ENCODE measurements at regions of chr12 and their contacts with region 1.

Region 1: DNA sequence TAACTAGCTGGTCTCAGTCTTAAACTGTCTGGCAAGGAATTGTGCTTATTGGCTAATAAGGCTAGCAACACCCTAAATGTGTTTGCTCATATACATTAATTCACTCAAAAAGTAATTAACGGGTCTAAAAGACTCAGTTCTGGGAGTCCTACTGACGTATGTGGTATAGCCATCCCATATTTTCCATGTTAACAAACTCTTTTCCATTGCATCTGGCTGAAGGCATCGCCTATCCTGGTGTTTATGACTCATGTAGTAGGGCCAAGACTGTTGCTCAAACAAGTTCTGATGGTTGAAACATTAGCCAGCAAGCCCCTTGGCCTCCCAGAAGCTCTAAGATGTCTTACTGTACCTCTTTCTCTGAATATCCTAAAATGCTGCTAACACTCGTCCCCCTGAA is 98.5 kb downstream of the PHLDA1 start:
- DNase-seq: no peak
- ATAC-seq: no peak
- H3K4me3 Mint-ChIP-seq: no peak overlapping the region
- H3K27ac Mint-ChIP-seq: no peak overlapping the region
- H3K4me1 Mint-ChIP-seq: peaks cover 34% of the 10 kb centered on the region
- H3K27me3 Mint-ChIP-seq: peaks cover 3% of the 10 kb centered on the region
- CTCF ChIP-seq: no peak

Region 2: GRCh38 chr12:75641031-75641780 is 291.9 kb before region 1 on chr12:
- CTCF ChIA-PET with region 1: no interaction called
- POLR2A ChIA-PET with region 1: no interaction called
- intact Hi-C with region 1: loop called (anchors 10 kb)
- DNase-seq: peak; percentile 73
- ATAC-seq: peak; percentile 93
- H3K4me3 Mint-ChIP-seq: no peak overlapping the region
- H3K27ac Mint-ChIP-seq: peak overlapping the region; percentile 70
- H3K4me1 Mint-ChIP-seq: peaks cover 23% of the 10 kb centered on the region
- H3K27me3 Mint-ChIP-seq: peaks cover 10% of the 10 kb centered on the region
- CTCF ChIP-seq: no peak

Region 3: GRCh38 chr12:75850721-75851462 is 82.2 kb before region 1 on chr12:
- CTCF ChIA-PET with region 1: no interaction called
- POLR2A ChIA-PET with region 1: no interaction called
- intact Hi-C with region 1: no loop called
- DNase-seq: no peak
- ATAC-seq: no peak
- H3K4me3 Mint-ChIP-seq: no peak overlapping the region
- H3K27ac Mint-ChIP-seq: no peak overlapping the region
- H3K4me1 Mint-ChIP-seq: peaks cover 3% of the 10 kb centered on the region
- H3K27me3 Mint-ChIP-seq: peaks cover 19% of the 10 kb centered on the region
- CTCF ChIP-seq: no peak

Region 4: GRCh38 chr12:75944097-75944904 is 11.2 kb after region 1 on chr12:
- CTCF ChIA-PET with region 1: interaction called, 8 read pairs
- POLR2A ChIA-PET with region 1: interaction called, 13 read pairs
- intact Hi-C with region 1: no loop called
- DNase-seq: peak; percentile 42
- ATAC-seq: peak; percentile 88
- H3K4me3 Mint-ChIP-seq: peak overlapping the region; percentile 55
- H3K27ac Mint-ChIP-seq: peak overlapping the region; percentile 96
- H3K4me1 Mint-ChIP-seq: peaks cover 32% of the 10 kb centered on the region
- H3K27me3 Mint-ChIP-seq: no peaks in the 10 kb centered on the region
- CTCF ChIP-seq: no peak

Measured in activated CD8-positive, alpha-beta T cell treated with anti-CD3 and anti-CD28 coated beads for 36 hours (primary cell).